ENCODE measurements at regions of chr1 and their contacts with region 1.

Region 1: GRCh38 chr1:163528710-163529348 is 207.1 kb downstream of the NUF2 start:
- DNase-seq: peak in 1 of 2 donors; percentile 7
- ATAC-seq: no peak
- H3K4me3 ChIP-seq: no peak overlapping the region
- H3K27ac ChIP-seq: no peak overlapping the region
- H3K4me1 ChIP-seq: no peaks in the 10 kb centered on the region
- H3K27me3 ChIP-seq: no peaks in the 10 kb centered on the region
- CTCF ChIP-seq: peak in 8 of 9 donors; percentile 30 to 70 (median 58)

Region 2: DNA sequence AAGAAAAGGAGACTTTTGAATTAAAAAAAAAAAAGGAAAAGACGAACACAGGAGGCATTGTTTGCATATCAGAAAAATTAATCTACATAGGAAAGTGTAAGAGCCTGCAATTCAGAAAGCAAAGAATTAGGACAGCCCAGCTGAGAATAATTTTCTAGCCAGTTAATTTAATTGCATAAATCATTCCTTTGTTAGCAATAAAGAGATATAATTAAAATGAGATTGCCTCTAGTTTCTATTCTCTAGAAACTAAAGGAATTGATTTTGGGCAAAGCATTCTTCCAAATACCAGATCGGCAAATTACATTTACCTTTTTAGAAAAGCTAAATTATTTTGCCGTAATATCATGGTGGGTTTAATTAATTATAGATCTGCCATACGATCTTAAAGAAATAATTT is 161.1 kb before region 1 on chr1:
- intact Hi-C with region 1: no loop called
- DNase-seq: no peak
- ATAC-seq: no peak
- H3K4me3 ChIP-seq: no peak overlapping the region
- H3K27ac ChIP-seq: no peak overlapping the region
- H3K4me1 ChIP-seq: no peaks in the 10 kb centered on the region
- H3K27me3 ChIP-seq: peaks cover 0 to 7% (median 0%) of the 10 kb centered on the region in 7 donors
- CTCF ChIP-seq: no peak

Region 3: GRCh38 chr1:163399976-163400601 is 128.7 kb before region 1 on chr1:
- intact Hi-C with region 1: loop called in 1 of 10 experiments (anchors 10 kb)
- DNase-seq: no peak
- ATAC-seq: no peak
- H3K4me3 ChIP-seq: no peak overlapping the region
- H3K27ac ChIP-seq: no peak overlapping the region
- H3K4me1 ChIP-seq: no peaks in the 10 kb centered on the region
- H3K27me3 ChIP-seq: peaks cover 0 to 4% (median 0%) of the 10 kb centered on the region in 7 donors
- CTCF ChIP-seq: no peak

Region 4: GRCh38 chr1:163410073-163410999 is 118.5 kb before region 1 on chr1:
- intact Hi-C with region 1: loop called in 3 of 10 experiments (anchors 10 kb)
- DNase-seq: peak in 1 of 2 donors; percentile 17
- ATAC-seq: peak in 1 of 8 donors; percentile 9
- H3K4me3 ChIP-seq: no peak overlapping the region
- H3K27ac ChIP-seq: no peak overlapping the region
- H3K4me1 ChIP-seq: peaks cover 0 to 11% (median 0%) of the 10 kb centered on the region in 9 donors
- H3K27me3 ChIP-seq: peaks cover 0 to 3% (median 0%) of the 10 kb centered on the region in 7 donors
- CTCF ChIP-seq: peak; percentile 44 to 84 (median 78)

Region 5: DNA sequence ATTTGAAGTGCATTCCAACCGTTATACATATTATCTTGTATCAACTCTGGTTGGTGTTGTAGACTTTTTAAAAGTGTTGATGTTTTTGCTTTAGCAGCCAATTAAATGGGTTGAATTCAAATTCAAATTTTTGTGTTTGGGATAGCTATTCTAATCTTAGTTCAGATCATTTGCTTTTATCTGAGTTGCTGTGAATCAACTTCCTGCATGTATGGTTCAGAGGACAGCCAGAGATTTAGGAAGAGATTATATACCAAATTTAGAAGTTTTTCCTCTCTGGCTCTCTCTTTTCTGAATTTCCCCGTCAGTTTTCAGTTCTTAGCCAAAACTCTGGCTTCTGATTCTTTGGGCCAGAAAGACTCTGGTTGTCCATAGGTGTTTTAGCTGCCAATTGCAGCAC is 208.4 kb after region 1 on chr1:
- intact Hi-C with region 1: no loop called
- DNase-seq: no peak
- ATAC-seq: no peak
- H3K4me3 ChIP-seq: no peak overlapping the region
- H3K27ac ChIP-seq: no peak overlapping the region
- H3K4me1 ChIP-seq: no peaks in the 10 kb centered on the region
- H3K27me3 ChIP-seq: no peaks in the 10 kb centered on the region
- CTCF ChIP-seq: no peak